ENCODE measurements at regions of chr6 and their contacts with region 1.

Region 1: GRCh38 chr6:31795616-31796298 is at the start of gene VARS1:
- DNase-seq: peak; percentile 77 to 90 (median 84)
- H3K4me3 ChIP-seq: peak within 1 kb of the TSS; percentile 82
- H3K4me3 Mint-ChIP-seq: peak within 1 kb of the TSS; percentile 89 to 99 (median 94)
- H3K27ac ChIP-seq: peak within 1 kb of the TSS; percentile 87
- H3K27ac Mint-ChIP-seq: peak within 1 kb of the TSS; percentile 85 to 99 (median 98)
- H3K4me1 ChIP-seq: peaks cover 46% of the 10 kb centered on the region
- H3K4me1 Mint-ChIP-seq: peaks cover 34 to 59% (median 40%) of the 10 kb centered on the region in 3 donors
- H3K27me3 ChIP-seq: no peaks in the 10 kb centered on the region
- H3K27me3 Mint-ChIP-seq: no peaks in the 10 kb centered on the region
- total RNA-seq, gene VARS1: 179 to 180 TPM

Region 2: DNA sequence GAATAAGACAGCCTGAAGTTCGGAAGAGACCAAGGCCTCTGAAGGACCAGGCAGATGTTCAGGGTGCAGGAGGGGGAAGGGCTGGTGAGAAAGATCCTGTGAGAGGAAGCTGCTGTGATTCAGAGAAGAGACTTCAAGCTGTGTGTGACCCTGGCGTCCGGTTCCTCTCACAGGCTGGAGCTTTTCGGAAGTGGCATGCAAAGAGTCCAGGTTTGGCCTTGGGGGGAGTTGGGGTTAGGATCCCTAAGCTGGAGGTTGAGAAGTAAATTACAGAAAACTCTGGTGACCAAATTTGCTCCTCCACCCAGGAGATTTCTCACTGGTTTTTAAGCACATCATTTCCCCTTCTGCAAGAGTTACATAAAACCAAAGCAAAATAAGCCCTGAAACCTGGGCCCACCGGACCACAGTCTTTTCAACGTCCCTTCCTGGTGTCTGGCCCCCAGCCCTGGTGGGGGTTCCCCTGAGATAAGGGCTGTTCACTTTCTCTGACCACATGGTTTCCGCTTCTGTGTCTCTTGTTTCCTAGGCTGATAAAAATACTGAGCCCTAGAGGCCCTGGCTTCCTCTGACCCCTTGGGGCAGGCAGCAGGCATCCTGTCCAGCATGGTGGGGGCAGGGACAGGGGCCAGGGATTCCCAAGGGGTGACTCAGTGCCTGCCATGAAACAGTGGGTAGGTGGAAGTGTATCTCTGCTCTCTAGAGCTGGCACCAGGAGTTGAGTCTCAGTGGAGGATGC is 235.6 kb before region 1 on chr6:
- CTCF ChIA-PET with region 1: no interaction called
- POLR2A ChIA-PET with region 1: no interaction called
- DNase-seq: peak in 3 of 5 donors; percentile 42 to 64 (median 49)
- H3K4me3 ChIP-seq: peak overlapping the region; percentile 54
- H3K4me3 Mint-ChIP-seq: peak overlapping the region; percentile 76 to 91 (median 85)
- H3K27ac ChIP-seq: peak overlapping the region; percentile 18
- H3K27ac Mint-ChIP-seq: peak overlapping the region; percentile 89 to 97 (median 94)
- H3K4me1 ChIP-seq: peaks cover 70% of the 10 kb centered on the region
- H3K4me1 Mint-ChIP-seq: peaks cover 62 to 79% (median 74%) of the 10 kb centered on the region in 3 donors
- H3K27me3 ChIP-seq: no peaks in the 10 kb centered on the region
- H3K27me3 Mint-ChIP-seq: no peaks in the 10 kb centered on the region

Region 3: DNA sequence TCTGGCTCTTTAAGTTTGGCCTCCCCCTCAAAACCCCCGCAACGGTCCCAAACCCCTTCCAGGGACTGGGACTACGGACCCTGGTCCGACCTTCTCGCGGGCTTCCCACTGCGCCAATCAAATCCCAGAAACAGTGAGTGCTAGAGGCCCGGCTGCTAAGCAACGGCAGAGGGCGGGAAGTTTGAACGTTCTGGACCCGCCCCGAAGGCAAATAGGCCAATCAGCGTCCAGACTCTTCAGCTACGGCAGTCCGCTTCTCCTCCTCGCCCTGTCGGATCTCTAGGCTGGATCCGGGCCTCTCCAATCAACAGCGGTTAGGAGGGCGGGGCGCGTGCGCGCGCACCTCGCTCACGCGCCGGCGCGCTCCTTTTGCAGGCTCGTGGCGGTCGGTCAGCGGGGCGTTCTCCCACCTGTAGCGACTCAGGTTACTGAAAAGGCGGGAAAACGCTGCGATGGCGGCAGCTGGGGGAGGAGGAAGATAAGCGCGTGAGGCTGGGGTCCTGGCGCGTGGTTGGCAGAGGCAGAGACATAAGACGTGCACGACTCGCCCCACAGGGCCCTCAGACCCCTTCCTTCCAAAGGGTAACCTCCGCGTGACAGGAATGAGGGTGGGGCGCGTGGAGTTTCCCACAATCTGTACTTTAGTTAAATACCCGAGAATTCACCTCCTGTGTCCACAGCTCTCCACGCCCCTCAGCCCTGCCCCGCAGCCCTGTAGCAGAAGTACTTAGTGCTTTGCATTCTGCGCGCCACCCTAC is 55.9 kb before region 1 on chr6 and contains the start of gene MSH5:
- CTCF ChIA-PET with region 1: interaction called, 18 read pairs
- POLR2A ChIA-PET with region 1: interaction called, 5 read pairs
- DNase-seq: peak; percentile 91 to 97 (median 93)
- H3K4me3 ChIP-seq: peak within 1 kb of the TSS; percentile 84
- H3K4me3 Mint-ChIP-seq: peak within 1 kb of the TSS; percentile 93 to 99 (median 98)
- H3K27ac ChIP-seq: peak within 1 kb of the TSS; percentile 98
- H3K27ac Mint-ChIP-seq: peak within 1 kb of the TSS; percentile 91 to 99 (median 96)
- H3K4me1 ChIP-seq: peaks cover 40% of the 10 kb centered on the region
- H3K4me1 Mint-ChIP-seq: peaks cover 46 to 62% (median 55%) of the 10 kb centered on the region in 3 donors
- H3K27me3 ChIP-seq: no peaks in the 10 kb centered on the region
- H3K27me3 Mint-ChIP-seq: no peaks in the 10 kb centered on the region
- total RNA-seq, gene MSH5: 36.4 to 39.8 TPM

Region 4: GRCh38 chr6:31806465-31807272 is 10.9 kb after region 1 on chr6 and contains the start of gene LSM2:
- CTCF ChIA-PET with region 1: interaction called, 21 read pairs
- POLR2A ChIA-PET with region 1: interaction called, 18 read pairs
- DNase-seq: peak; percentile 95 to 98 (median 97)
- H3K4me3 ChIP-seq: peak within 1 kb of the TSS; percentile 95
- H3K4me3 Mint-ChIP-seq: peak within 1 kb of the TSS; percentile 83 to 94 (median 91)
- H3K27ac ChIP-seq: peak within 1 kb of the TSS; percentile 93
- H3K27ac Mint-ChIP-seq: peak within 1 kb of the TSS; percentile 85 to 97 (median 94)
- H3K4me1 ChIP-seq: peaks cover 12% of the 10 kb centered on the region
- H3K4me1 Mint-ChIP-seq: peaks cover 17 to 45% (median 28%) of the 10 kb centered on the region in 3 donors
- H3K27me3 ChIP-seq: no peaks in the 10 kb centered on the region
- H3K27me3 Mint-ChIP-seq: no peaks in the 10 kb centered on the region
- total RNA-seq, gene LSM2: 160 to 172 TPM

Region 5: GRCh38 chr6:31815025-31815838 is 19.5 kb after region 1 on chr6 and contains the starts of genes HSPA1A and HSPA1L:
- CTCF ChIA-PET with region 1: interaction called, 13 read pairs
- POLR2A ChIA-PET with region 1: interaction called, 8 read pairs
- DNase-seq: peak; percentile 35 to 70 (median 49)
- H3K4me3 ChIP-seq: peak within 1 kb of the TSS; percentile 70
- H3K4me3 Mint-ChIP-seq: peak within 1 kb of the TSS; percentile 93 to 99 (median 96)
- H3K27ac ChIP-seq: peak within 1 kb of the TSS; percentile 88
- H3K27ac Mint-ChIP-seq: peak within 1 kb of the TSS; percentile 89 to 97 (median 94)
- H3K4me1 ChIP-seq: peaks cover 36% of the 10 kb centered on the region
- H3K4me1 Mint-ChIP-seq: peaks cover 41 to 58% (median 52%) of the 10 kb centered on the region in 3 donors
- H3K27me3 ChIP-seq: no peaks in the 10 kb centered on the region
- H3K27me3 Mint-ChIP-seq: no peaks in the 10 kb centered on the region
- total RNA-seq, gene HSPA1A: 64.8 to 70.1 TPM
- total RNA-seq, gene HSPA1L: 3.5 to 3.8 TPM

Region 6: DNA sequence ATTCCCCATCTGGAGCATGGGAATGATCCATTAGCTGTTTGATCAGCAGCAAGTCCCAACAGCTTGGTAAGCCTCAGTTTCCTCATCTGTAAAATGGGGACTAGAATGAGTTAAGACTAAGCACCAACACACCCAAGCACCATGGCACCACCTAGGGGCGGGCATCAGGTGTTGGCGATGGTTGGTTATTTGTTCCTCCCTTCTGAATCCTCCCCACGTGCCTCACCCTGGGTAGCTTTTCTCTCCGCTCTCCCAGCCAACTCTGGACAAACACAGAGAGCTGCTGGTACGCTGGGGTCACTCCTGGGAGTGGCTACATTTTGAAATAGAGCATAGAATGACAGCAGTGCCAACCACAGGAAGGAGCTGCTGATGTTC is 1812.0 kb after region 1 on chr6:
- CTCF ChIA-PET with region 1: no interaction called
- POLR2A ChIA-PET with region 1: no interaction called
- DNase-seq: no peak
- H3K4me3 ChIP-seq: no peak overlapping the region
- H3K4me3 Mint-ChIP-seq: no peak overlapping the region
- H3K27ac ChIP-seq: no peak overlapping the region
- H3K27ac Mint-ChIP-seq: no peak overlapping the region
- H3K4me1 ChIP-seq: no peaks in the 10 kb centered on the region
- H3K4me1 Mint-ChIP-seq: no peaks in the 10 kb centered on the region
- H3K27me3 ChIP-seq: no peaks in the 10 kb centered on the region
- H3K27me3 Mint-ChIP-seq: peaks cover 3 to 13% of the 10 kb centered on the region in 2 donors

Measured in CD8-positive, alpha-beta memory T cell (primary cell).